GM10248 (cell line): ENCODE measurements at regions of chr20 and their contacts with region 1.

Region 1: DNA sequence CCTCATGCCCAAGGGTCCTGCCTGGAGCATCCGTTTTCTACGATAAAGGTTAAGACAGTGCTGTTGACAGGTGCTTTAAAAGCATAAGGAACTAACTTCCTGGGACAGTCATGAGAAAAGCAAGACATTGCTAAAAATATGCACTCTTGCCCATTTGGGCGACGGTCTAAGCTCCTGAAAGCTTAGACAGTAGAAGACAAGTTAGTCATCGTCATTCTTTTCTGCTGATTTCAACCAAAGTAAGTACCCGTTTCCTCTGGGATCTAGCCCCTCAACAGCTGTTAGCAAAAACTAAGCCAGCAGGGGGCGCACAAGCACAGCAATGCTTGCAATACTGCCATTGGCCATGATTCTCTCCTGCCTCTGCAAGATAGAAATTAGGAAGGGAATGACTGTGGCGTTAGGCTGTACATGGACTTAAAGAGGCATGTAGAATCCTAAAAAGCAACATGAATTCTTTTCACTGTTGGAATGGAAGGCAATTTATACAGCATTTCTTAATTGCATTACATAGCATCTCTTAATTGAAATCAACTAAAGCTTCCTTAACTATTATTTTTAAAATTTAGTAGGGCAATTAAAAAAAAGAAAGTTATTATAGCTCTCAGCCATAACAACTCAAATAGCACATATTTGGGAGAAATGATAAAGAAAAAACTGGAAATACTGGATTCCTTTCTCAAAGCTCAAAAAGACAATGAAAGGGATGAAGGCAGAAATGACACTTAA is 147.8 kb upstream of the RALGAPA2 start:
- DNase-seq: peak; percentile 76
- CTCF ChIP-seq: peak; percentile 90

Region 2: GRCh38 chr20:20837574-20838021 is 22.6 kb before region 1 on chr20:
- CTCF ChIA-PET with region 1: interaction called, 20 read pairs
- POLR2A ChIA-PET with region 1: no interaction called
- DNase-seq: peak; percentile 58
- CTCF ChIP-seq: peak; percentile 64

Region 3: GRCh38 chr20:20849161-20849560 is 11.1 kb before region 1 on chr20:
- CTCF ChIA-PET with region 1: interaction called, 24 read pairs
- POLR2A ChIA-PET with region 1: no interaction called
- DNase-seq: no peak
- CTCF ChIP-seq: no peak

Region 4: DNA sequence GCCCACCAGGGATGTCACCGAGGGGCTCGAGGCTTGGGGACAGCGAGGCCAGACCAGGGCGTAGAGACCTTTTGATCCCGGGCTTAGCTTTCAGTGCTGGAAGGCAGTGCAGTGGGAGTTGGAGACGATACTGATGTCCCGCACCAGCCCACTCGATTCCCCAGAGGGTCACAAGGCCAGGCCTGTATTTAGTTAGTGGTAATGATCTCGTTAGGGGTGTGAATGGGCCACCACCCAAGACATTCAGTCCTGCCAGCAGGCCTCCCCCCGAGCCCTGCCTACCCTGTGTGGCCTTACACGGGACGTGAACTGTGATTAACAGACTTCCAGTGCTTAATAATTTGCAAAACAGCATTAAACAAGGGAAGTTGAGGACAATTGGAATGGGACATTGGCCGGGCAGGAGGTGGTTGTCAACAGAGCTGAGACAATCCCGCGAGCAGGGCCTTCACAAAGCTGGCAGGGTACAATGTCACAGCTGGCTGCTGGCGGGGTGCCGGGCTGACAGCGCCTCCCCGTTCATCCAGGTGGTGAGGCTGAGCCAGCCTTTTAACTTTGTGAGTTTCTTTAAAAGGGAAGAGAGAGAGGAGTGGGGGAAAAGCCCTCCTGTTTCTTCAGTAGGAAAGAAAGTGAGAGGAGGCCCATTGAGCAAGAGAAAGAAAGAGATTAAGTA is 27.5 kb after region 1 on chr20:
- CTCF ChIA-PET with region 1: interaction called, 12 read pairs
- POLR2A ChIA-PET with region 1: no interaction called
- DNase-seq: no peak
- CTCF ChIP-seq: no peak

Region 5: GRCh38 chr20:20933142-20933958 is 73.1 kb after region 1 on chr20:
- CTCF ChIA-PET with region 1: no interaction called
- POLR2A ChIA-PET with region 1: no interaction called
- DNase-seq: no peak
- CTCF ChIP-seq: no peak

Region 6: DNA sequence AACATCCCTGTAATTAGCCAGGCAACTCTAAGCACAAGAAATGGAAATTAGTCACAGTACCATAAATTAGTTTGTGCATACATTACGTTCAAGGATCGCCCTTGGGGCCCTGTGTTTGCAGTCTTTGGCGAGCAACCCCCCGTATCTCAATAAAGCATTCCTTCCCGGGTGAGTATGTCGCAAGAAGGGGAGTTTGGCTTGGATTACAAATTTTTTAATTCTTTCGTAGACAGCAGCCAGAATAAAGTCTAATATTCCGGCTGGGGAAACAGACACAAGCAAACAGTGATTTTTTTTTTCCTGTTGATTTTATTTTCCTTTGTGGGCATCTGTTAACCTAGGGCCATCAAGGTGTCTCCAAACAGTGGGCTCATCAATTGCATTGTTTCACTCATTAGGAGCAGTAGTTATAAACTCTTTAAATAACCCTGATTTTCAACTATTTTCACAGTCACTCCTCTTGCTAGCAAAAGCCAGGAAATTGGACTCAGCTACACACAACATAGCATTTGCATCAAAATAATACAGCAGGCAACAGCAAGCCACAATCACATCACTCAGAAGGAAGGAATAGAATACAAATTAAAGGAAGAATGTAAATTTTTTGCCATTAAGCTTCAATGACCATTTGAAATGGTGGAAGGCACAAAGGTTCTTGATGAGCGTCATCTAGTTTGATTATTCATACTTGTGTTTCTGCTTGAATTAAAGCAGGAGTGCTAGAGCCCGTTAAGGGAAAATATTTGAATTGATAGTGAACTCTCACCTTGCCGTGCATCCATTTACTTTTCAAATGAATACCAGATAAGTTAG is 160.6 kb after region 1 on chr20:
- CTCF ChIA-PET with region 1: no interaction called
- POLR2A ChIA-PET with region 1: no interaction called
- DNase-seq: no peak
- CTCF ChIP-seq: no peak

Region 7: GRCh38 chr20:21571841-21572690 is 711.8 kb after region 1 on chr20:
- CTCF ChIA-PET with region 1: interaction called, 20 read pairs
- POLR2A ChIA-PET with region 1: no interaction called
- DNase-seq: peak; percentile 34
- CTCF ChIP-seq: peak; percentile 85